T-cell (primary cell): ENCODE measurements at regions of chr9 and their contacts with region 1.

Region 1: DNA sequence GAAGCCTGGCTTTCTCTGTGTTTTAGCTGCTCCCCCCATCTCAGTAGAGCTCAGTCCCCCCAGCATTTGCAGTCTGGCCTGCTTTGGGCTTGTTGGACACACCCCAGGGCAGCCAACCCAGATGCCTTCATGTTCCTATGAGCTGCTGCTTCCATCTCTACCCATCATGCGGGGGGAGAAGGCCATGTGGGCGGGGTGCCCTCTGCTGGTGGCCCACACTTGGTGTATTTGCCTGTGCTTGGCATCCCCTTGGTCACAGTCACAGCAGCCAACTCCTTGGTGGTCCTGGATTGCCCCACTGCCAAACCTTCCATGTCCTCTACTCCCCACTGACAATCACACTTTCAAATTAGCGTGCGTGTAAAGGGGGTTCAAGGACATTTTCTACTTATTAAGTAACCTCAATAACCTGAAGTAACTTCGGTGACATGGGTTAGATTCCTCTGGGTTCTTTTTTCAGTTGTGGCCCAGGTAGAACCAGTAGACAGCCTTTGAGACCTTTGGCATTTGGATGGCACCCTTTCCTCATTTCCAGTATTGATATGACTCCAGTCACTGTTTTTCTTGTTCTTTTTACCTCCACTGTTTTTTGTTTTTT is 42.8 kb downstream of the SNX30 start:
- DNase-seq: peak; percentile 58 to 85 (median 79)
- ATAC-seq: peak; percentile 81 to 96 (median 93)
- H3K4me3 ChIP-seq: no peak overlapping the region
- H3K4me3 Mint-ChIP-seq: no peak overlapping the region
- H3K27ac ChIP-seq: no peak overlapping the region
- H3K27ac Mint-ChIP-seq: no peak overlapping the region
- H3K4me1 ChIP-seq: peaks cover 0 to 3% of the 10 kb centered on the region in 2 experiments
- H3K4me1 Mint-ChIP-seq: peaks cover 14 to 16% (median 15%) of the 10 kb centered on the region in 3 donors
- H3K27me3 ChIP-seq: no peaks in the 10 kb centered on the region
- H3K27me3 Mint-ChIP-seq: no peaks in the 10 kb centered on the region

Region 2: DNA sequence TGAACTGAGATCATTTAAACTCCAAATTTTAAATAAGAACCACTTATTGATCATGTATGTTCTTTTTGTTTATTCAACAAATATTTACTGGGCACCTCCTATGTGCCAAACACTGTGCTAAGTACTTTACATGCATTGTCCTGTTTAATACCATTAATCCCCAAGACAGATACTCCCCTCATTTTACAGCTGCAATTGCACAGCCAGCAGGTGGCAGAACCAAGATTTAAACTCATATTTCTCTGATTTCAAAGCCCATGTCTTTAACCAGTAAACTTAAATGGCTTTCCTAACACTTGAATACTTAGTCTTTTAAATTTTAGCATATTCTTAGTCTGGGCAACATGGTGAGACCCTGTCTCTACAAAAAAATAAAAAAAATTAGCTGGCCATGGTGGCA is 350.1 kb before region 1 on chr9:
- CTCF ChIA-PET with region 1: interaction called, 11 to 23 read pairs
- POLR2A ChIA-PET with region 1: no interaction called
- DNase-seq: peak in 25 of 35 experiments; percentile 4 to 56 (median 18)
- ATAC-seq: no peak
- H3K4me3 ChIP-seq: no peak overlapping the region
- H3K4me3 Mint-ChIP-seq: no peak overlapping the region
- H3K27ac ChIP-seq: no peak overlapping the region
- H3K27ac Mint-ChIP-seq: no peak overlapping the region
- H3K4me1 ChIP-seq: no peaks in the 10 kb centered on the region
- H3K4me1 Mint-ChIP-seq: peaks cover 0 to 14% (median 0%) of the 10 kb centered on the region in 3 donors
- H3K27me3 ChIP-seq: no peaks in the 10 kb centered on the region
- H3K27me3 Mint-ChIP-seq: no peaks in the 10 kb centered on the region

Region 3: GRCh38 chr9:112717661-112718341 is 75.5 kb before region 1 on chr9 and contains the start of gene INIP:
- CTCF ChIA-PET with region 1: interaction called in 1 of 2 experiments, 26 read pairs
- POLR2A ChIA-PET with region 1: no interaction called
- DNase-seq: peak; percentile 92 to 99 (median 97)
- ATAC-seq: peak; percentile 91 to 96 (median 93)
- H3K4me3 ChIP-seq: peak within 1 kb of the TSS; percentile 76 to 97
- H3K4me3 Mint-ChIP-seq: peak within 1 kb of the TSS; percentile 83 to 98 (median 97)
- H3K27ac ChIP-seq: peak within 1 kb of the TSS; percentile 94
- H3K27ac Mint-ChIP-seq: peak within 1 kb of the TSS; percentile 98
- H3K4me1 ChIP-seq: peaks cover 8 to 20% of the 10 kb centered on the region in 2 experiments
- H3K4me1 Mint-ChIP-seq: peaks cover 19 to 33% (median 26%) of the 10 kb centered on the region in 3 donors
- H3K27me3 ChIP-seq: no peaks in the 10 kb centered on the region
- H3K27me3 Mint-ChIP-seq: no peaks in the 10 kb centered on the region
- total RNA-seq, gene INIP: 13.6 to 27.4 (median 22.6) TPM

Region 4: GRCh38 chr9:112887381-112887780 is 94.1 kb after region 1 on chr9:
- CTCF ChIA-PET with region 1: no interaction called
- POLR2A ChIA-PET with region 1: no interaction called
- DNase-seq: peak in 1 of 35 experiments; percentile 11
- ATAC-seq: no peak
- H3K4me3 ChIP-seq: no peak overlapping the region
- H3K4me3 Mint-ChIP-seq: no peak overlapping the region
- H3K27ac ChIP-seq: no peak overlapping the region
- H3K27ac Mint-ChIP-seq: no peak overlapping the region
- H3K4me1 ChIP-seq: no peaks in the 10 kb centered on the region
- H3K4me1 Mint-ChIP-seq: no peaks in the 10 kb centered on the region
- H3K27me3 ChIP-seq: peaks cover 0 to 34% of the 10 kb centered on the region in 2 experiments
- H3K27me3 Mint-ChIP-seq: peaks cover 19 to 29% of the 10 kb centered on the region in 2 donors

Region 5: DNA sequence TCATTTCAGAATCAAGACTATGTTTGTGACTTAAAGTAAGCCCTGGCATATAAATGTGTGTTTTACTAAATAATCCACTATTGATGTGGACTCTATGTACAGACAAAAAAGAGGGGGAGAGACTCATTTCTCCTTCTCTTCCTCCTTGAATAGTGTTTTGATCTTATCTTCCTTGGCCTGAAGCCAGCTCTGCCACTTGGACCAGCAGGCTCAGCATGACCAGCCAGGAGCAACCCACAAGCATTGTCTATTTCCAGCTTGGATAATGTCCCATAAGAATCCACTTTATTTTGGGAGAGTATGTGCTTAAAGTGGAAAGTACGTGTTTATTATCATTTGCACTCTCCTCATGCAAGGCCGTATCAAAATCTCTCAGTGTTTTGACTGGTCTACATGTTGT is 121.2 kb after region 1 on chr9:
- CTCF ChIA-PET with region 1: no interaction called
- POLR2A ChIA-PET with region 1: no interaction called
- DNase-seq: no peak
- ATAC-seq: no peak
- H3K4me3 ChIP-seq: no peak overlapping the region
- H3K4me3 Mint-ChIP-seq: no peak overlapping the region
- H3K27ac ChIP-seq: no peak overlapping the region
- H3K27ac Mint-ChIP-seq: no peak overlapping the region
- H3K4me1 ChIP-seq: no peaks in the 10 kb centered on the region
- H3K4me1 Mint-ChIP-seq: no peaks in the 10 kb centered on the region
- H3K27me3 ChIP-seq: peaks cover 0 to 2% of the 10 kb centered on the region in 2 experiments
- H3K27me3 Mint-ChIP-seq: peaks cover 5 to 18% of the 10 kb centered on the region in 2 donors